ENCODE measurements at regions of chr2 and their contacts with region 1.

Region 1: DNA sequence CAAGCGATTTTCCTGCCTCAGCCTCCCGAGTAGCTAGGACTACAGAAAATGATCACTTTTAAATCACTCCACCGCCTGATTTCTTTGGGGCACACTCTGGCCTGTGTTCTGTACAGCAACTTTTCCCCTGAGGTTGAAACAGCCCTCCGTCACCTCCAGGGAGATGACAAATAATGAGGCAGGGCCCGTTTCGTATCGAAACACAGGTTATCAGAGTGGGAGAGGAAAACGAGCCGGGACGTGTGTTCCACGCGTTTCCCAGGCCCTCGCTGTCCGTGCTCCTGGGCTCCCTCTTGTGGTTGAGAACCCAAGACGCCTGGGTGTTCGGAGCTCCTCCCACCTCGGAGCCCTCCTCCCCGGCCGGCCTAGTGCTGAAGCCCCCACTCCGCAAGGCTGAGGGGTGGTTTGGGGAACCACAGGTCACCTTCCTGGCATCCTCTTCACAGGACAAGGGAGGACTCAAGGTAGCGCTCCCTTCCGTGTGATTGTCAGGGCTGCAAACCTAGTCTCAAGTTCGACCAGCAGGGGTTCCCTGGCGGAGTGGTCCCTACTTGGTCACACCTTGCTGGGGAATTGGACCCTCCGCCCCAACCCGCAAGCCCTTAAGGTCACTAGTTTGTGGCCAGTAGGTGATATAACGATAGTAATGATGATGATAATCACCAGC is 12.8 kb downstream of the ATP6V1B1 start:
- DNase-seq: peak; percentile 83 to 92
- H3K4me3 ChIP-seq: peak overlapping the region; percentile 27 to 40 (median 28)
- H3K27ac ChIP-seq: no peak overlapping the region
- H3K4me1 ChIP-seq: peaks cover 4 to 23% (median 15%) of the 10 kb centered on the region in 4 donors
- H3K27me3 ChIP-seq: peaks cover 0 to 53% (median 10%) of the 10 kb centered on the region in 3 donors
- CTCF ChIP-seq: peak in 5 of 7 experiments; percentile 43 to 78 (median 73)
- EP300 ChIP-seq: no peak
- POLR2A ChIP-seq: no peak

Region 2: GRCh38 chr2:70440621-70441020 is 507.8 kb before region 1 on chr2:
- intact Hi-C with region 1: no loop called
- DNase-seq: peak in 1 of 2 donors; percentile 32
- H3K4me3 ChIP-seq: no peak overlapping the region
- H3K27ac ChIP-seq: no peak overlapping the region
- H3K4me1 ChIP-seq: no peaks in the 10 kb centered on the region
- H3K27me3 ChIP-seq: no peaks in the 10 kb centered on the region
- CTCF ChIP-seq: no peak
- EP300 ChIP-seq: no peak
- POLR2A ChIP-seq: no peak

Region 3: GRCh38 chr2:70871398-70872211 is 76.9 kb before region 1 on chr2:
- intact Hi-C with region 1: loop called (anchors 10 kb)
- DNase-seq: peak; percentile 90 to 94
- H3K4me3 ChIP-seq: peak overlapping the region in 3 of 4 donors; percentile 6 to 26 (median 18)
- H3K27ac ChIP-seq: no peak overlapping the region
- H3K4me1 ChIP-seq: peaks cover 5 to 10% (median 9%) of the 10 kb centered on the region in 4 donors
- H3K27me3 ChIP-seq: peaks cover 0 to 68% (median 48%) of the 10 kb centered on the region in 3 donors
- CTCF ChIP-seq: peak in 5 of 7 experiments; percentile 80 to 92 (median 89)
- EP300 ChIP-seq: no peak
- POLR2A ChIP-seq: no peak

Region 4: DNA sequence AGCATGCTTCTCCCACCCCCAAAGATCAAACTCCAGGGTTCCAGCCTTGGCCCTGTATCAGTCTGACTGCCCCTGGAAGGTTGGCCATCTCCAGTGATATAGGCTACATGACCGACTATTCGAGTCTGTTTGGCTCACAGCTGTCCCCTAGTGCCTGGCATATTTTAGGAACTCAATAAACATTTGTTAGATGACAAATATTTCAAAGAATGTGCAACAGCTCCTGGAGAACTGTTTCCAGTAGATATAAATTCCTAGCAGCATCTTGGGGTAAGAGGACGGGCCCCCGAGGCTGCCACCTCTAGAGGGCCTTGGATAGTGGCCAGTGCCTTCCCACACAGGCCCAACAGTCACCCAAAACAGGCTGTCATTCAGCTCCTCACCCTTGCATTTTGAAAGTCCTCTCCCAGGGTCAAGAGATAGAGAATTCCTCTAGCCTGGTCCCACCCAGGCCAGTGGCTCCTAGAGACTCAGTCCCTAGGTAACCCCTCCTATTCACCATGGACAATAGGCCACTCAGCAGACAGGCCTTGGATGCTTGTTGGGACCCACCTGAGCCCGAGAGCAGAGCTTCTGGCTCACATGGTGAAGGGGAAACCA is 57.9 kb before region 1 on chr2:
- intact Hi-C with region 1: no loop called
- DNase-seq: peak in 1 of 2 donors; percentile 7
- H3K4me3 ChIP-seq: no peak overlapping the region
- H3K27ac ChIP-seq: no peak overlapping the region
- H3K4me1 ChIP-seq: peaks cover 22 to 27% (median 25%) of the 10 kb centered on the region in 4 donors
- H3K27me3 ChIP-seq: peaks cover 26 to 99% (median 76%) of the 10 kb centered on the region in 3 donors
- CTCF ChIP-seq: no peak
- EP300 ChIP-seq: no peak
- POLR2A ChIP-seq: no peak

Measured in stomach (tissue), 19 donors.